ENCODE measurements at regions of chr2 and their contacts with region 1.

Region 1: DNA sequence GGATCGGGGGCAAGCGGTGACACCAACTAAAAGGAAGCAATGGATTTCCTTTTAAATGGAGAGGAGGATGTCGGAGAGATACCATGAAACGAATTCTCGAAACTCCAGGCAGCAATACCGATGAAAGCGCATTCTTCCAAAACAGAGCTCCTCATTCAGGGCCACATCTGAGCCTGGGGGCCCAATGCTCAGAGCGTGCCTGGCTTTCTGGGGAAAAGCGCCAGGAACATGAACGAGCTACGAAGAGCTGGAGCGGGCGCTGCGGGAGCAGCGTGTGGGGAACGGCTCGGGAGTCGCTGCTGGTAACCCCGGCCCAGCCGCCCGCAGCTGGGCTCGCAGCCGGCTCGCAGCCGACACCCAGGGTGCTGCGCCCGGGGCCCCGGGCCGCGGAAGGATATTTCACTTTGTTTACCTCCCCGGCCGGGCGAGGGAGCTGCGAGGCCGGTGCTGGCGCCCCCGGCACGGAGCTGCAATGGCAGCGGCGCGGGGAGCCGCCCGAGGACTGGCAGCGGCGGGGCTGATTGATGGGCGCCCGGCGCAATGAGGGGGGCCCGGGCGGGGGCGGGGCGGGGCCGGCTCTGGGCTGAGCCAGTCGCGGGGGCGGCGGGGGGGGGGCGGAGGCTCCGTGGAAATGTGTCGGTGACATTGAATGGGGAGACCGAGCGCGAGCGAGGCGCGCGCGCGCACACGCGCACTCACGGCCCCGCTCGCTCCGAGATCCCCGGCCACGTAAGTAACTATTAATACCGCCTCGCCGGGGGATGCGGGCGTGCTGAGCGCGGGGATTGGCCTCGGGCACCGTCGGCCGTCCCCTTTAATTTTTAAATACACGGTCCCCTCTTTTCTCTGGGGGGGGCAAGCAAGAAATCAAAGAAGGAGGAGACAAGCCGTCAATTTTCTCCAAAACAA is at the start of gene TRIB2:
- DNase-seq: no peak
- ATAC-seq: peak; percentile 81
- H3K4me3 ChIP-seq: peak within 1 kb of the TSS; percentile 70 to 92
- H3K27ac ChIP-seq: peak within 1 kb of the TSS; percentile 96
- H3K4me1 ChIP-seq: peaks cover 40% of the 10 kb centered on the region
- H3K27me3 ChIP-seq: no peaks in the 10 kb centered on the region
- CTCF ChIP-seq: peak; percentile 67
- total RNA-seq, gene TRIB2: 43.2 TPM

Region 2: GRCh38 chr2:12176623-12177454 is 539.7 kb before region 1 on chr2:
- CTCF ChIA-PET with region 1: no interaction called
- POLR2A ChIA-PET with region 1: no interaction called
- in situ Hi-C with region 1: no loop called
- intact Hi-C with region 1: loop called (anchors 10 kb)
- DNase-seq: peak; percentile 48
- ATAC-seq: peak; percentile 96
- H3K4me3 ChIP-seq: no peak overlapping the region
- H3K27ac ChIP-seq: peak overlapping the region; percentile 65
- H3K4me1 ChIP-seq: peaks cover 14% of the 10 kb centered on the region
- H3K27me3 ChIP-seq: no peaks in the 10 kb centered on the region
- CTCF ChIP-seq: no peak

Region 3: DNA sequence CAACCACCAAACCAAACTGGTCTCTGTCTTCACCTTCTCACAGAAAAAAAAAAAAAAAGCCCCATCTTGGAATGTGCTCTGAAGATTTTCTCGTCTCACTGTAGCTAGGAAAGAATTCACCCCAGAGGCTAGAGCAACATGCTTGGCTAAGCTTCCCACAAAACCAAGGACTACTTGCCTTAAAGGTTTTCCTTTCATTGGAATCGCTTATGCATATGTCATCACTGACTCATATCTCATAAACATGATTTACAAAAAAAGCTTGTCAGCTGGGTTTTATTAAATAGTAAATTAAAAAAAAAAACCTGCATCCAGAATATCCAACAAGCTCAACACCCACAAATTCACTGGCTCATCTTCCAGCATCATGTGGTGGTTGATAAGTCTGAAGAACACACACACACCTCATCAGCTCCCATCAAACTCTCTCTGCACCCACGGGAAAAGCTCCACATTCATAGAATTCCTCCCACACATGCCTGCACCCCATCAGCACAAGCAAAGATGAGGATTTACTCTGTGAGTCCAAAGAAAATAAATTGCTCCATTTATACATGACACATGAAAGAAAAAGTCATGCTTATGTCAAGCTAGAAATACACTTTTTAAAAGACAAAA is 181.8 kb before region 1 on chr2:
- CTCF ChIA-PET with region 1: no interaction called
- POLR2A ChIA-PET with region 1: no interaction called
- in situ Hi-C with region 1: no loop called
- intact Hi-C with region 1: loop called (anchors 10 kb)
- DNase-seq: peak; percentile 24
- ATAC-seq: peak; percentile 96
- H3K4me3 ChIP-seq: 0 out of 4 replicates have a peak overlapping the region, but pooled peaks of 1 of the 2 experiments have one; percentile 9
- H3K27ac ChIP-seq: peak overlapping the region; percentile 75
- H3K4me1 ChIP-seq: peaks cover 24% of the 10 kb centered on the region
- H3K27me3 ChIP-seq: no peaks in the 10 kb centered on the region
- CTCF ChIP-seq: no peak

Region 4: DNA sequence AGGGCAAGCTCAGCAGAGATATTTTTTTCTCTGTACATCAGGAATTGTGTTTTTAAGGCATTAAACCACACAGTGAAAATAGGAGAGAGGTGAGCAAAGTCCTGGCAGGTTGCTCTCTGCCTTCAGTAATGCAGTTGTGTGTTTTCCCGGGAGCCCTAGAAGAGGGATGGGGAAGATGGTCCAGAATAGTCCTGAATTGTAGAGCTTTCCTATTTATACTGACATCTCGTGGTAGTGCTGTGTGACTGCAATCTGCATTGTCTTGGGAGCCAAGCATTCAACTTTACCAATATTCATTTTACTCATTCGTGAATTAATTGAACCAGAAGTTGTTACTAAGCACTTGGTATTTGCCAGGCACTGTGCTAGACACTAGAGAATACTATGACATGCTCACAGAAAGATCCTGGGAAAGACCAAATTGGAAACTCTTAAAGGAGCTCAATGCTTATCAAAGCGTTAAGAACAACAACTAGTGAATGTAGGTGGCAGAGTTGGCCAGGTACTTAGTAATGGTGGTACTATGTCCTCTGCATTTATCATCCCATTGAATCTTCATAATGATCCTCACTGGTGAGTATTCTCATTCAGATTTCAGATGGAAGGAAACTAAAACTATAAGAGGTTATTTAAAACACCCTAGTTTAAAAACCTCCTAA is 214.8 kb after region 1 on chr2:
- CTCF ChIA-PET with region 1: no interaction called
- POLR2A ChIA-PET with region 1: no interaction called
- in situ Hi-C with region 1: no loop called
- intact Hi-C with region 1: loop called (anchors 5 kb)
- DNase-seq: peak; percentile 51
- ATAC-seq: peak; percentile 92; the same call in 1 of the 2 replicates
- H3K4me3 ChIP-seq: no peak overlapping the region
- H3K27ac ChIP-seq: no peak overlapping the region
- H3K4me1 ChIP-seq: peaks cover 13% of the 10 kb centered on the region; the same call in 1 of the 2 replicates
- H3K27me3 ChIP-seq: no peaks in the 10 kb centered on the region
- CTCF ChIP-seq: peak; percentile 87